ENCODE measurements at regions of chr15 and their contacts with region 1.

Region 1: GRCh38 chr15:88620995-88621772 is at the start of gene AEN:
- DNase-seq: peak; percentile 98
- H3K4me3 ChIP-seq: peak within 1 kb of the TSS; percentile 33 to 78 (median 70)
- H3K27ac ChIP-seq: peak within 1 kb of the TSS; percentile 81
- H3K4me1 ChIP-seq: peaks cover 31% of the 10 kb centered on the region
- H3K27me3 ChIP-seq: no peaks in the 10 kb centered on the region
- CTCF ChIP-seq: no peak
- POLR2A ChIP-seq: peak; percentile 72
- total RNA-seq, gene AEN: 35.6 and 38.3 TPM in 2 replicates

Region 2: GRCh38 chr15:88498996-88499395 is 122.2 kb before region 1 on chr15:
- CTCF ChIA-PET with region 1: no interaction called
- POLR2A ChIA-PET with region 1: no interaction called
- dilution Hi-C with region 1: no loop called
- intact Hi-C with region 1: no loop called
- DNase-seq: no peak
- H3K4me3 ChIP-seq: no peak overlapping the region
- H3K27ac ChIP-seq: no peak overlapping the region
- H3K4me1 ChIP-seq: no peaks in the 10 kb centered on the region
- H3K27me3 ChIP-seq: no peaks in the 10 kb centered on the region
- CTCF ChIP-seq: no peak
- POLR2A ChIP-seq: no peak

Region 3: DNA sequence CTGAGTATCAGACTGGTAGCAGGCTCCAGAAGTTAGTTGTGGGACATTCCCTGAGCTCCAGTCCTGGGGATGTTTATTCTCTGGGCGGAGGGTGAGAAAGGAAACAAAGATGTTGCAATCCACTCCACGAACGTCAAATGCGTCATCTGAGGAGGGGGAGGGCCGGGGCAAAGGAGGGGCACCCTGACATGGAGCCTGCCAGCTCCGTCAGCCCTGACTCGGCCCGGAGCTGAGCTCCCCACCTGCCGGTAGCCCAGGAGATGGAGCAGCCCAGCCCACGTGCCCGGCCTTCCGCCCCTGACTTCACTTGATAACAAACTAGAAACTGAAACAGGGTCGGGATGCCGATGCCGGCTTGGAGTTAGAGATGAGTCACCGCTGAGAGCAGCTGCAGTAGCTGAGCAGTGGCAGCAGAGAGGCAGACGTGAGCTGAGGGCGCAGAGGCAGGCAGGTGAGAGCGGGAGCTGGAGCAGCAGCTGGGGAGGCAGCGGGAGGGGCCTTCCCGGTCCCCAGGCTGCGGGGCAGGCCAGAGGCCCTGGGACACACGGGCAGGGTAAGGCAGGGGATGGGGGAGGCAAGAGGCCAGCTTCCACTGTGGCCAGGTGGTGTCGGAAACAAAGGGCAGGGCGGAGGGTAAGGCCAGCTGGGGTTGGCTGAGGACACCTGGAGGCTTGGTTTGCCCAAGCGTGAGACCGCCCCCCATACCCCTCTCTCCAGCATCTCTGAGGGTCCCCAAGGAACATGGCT is 17.6 kb after region 1 on chr15 and contains the start of gene ISG20:
- CTCF ChIA-PET with region 1: interaction called, 13 read pairs
- POLR2A ChIA-PET with region 1: interaction called, 8 read pairs
- dilution Hi-C with region 1: no loop called
- intact Hi-C with region 1: loop called (anchors 1 kb)
- DNase-seq: peak; percentile 99
- H3K4me3 ChIP-seq: peak within 1 kb of the TSS in 1 of 3 experiments; percentile 24
- H3K27ac ChIP-seq: peak within 1 kb of the TSS; percentile 86
- H3K4me1 ChIP-seq: peaks cover 21% of the 10 kb centered on the region
- H3K27me3 ChIP-seq: no peaks in the 10 kb centered on the region
- CTCF ChIP-seq: peak; percentile 30 to 54
- POLR2A ChIP-seq: peak; percentile 75
- total RNA-seq, gene ISG20: 5.4 and 6.4 TPM in 2 replicates

Region 4: GRCh38 chr15:88664151-88664778 is 43.1 kb after region 1 on chr15:
- CTCF ChIA-PET with region 1: interaction called, 46 read pairs
- POLR2A ChIA-PET with region 1: no interaction called
- dilution Hi-C with region 1: no loop called
- intact Hi-C with region 1: no loop called
- DNase-seq: peak; percentile 34
- H3K4me3 ChIP-seq: no peak overlapping the region
- H3K27ac ChIP-seq: no peak overlapping the region
- H3K4me1 ChIP-seq: peaks cover 8% of the 10 kb centered on the region
- H3K27me3 ChIP-seq: no peaks in the 10 kb centered on the region
- CTCF ChIP-seq: peak in 1 of 2 donors; percentile 15
- POLR2A ChIP-seq: no peak

Region 5: GRCh38 chr15:88752951-88753350 is 131.8 kb after region 1 on chr15:
- CTCF ChIA-PET with region 1: no interaction called
- POLR2A ChIA-PET with region 1: no interaction called
- dilution Hi-C with region 1: no loop called
- intact Hi-C with region 1: no loop called
- DNase-seq: no peak
- H3K4me3 ChIP-seq: no peak overlapping the region
- H3K27ac ChIP-seq: no peak overlapping the region
- H3K4me1 ChIP-seq: no peaks in the 10 kb centered on the region
- H3K27me3 ChIP-seq: peaks cover 0 to 4% of the 10 kb centered on the region in 2 experiments
- CTCF ChIP-seq: no peak
- POLR2A ChIP-seq: no peak

Region 6: GRCh38 chr15:88834211-88834812 is 213.1 kb after region 1 on chr15:
- CTCF ChIA-PET with region 1: interaction called, 69 read pairs
- POLR2A ChIA-PET with region 1: no interaction called
- dilution Hi-C with region 1: no loop called
- intact Hi-C with region 1: loop called (anchors 1 kb)
- DNase-seq: peak; percentile 20
- H3K4me3 ChIP-seq: no peak overlapping the region
- H3K27ac ChIP-seq: no peak overlapping the region
- H3K4me1 ChIP-seq: no peaks in the 10 kb centered on the region
- H3K27me3 ChIP-seq: no peaks in the 10 kb centered on the region
- CTCF ChIP-seq: peak; percentile 53 to 65
- POLR2A ChIP-seq: no peak

Region 7: DNA sequence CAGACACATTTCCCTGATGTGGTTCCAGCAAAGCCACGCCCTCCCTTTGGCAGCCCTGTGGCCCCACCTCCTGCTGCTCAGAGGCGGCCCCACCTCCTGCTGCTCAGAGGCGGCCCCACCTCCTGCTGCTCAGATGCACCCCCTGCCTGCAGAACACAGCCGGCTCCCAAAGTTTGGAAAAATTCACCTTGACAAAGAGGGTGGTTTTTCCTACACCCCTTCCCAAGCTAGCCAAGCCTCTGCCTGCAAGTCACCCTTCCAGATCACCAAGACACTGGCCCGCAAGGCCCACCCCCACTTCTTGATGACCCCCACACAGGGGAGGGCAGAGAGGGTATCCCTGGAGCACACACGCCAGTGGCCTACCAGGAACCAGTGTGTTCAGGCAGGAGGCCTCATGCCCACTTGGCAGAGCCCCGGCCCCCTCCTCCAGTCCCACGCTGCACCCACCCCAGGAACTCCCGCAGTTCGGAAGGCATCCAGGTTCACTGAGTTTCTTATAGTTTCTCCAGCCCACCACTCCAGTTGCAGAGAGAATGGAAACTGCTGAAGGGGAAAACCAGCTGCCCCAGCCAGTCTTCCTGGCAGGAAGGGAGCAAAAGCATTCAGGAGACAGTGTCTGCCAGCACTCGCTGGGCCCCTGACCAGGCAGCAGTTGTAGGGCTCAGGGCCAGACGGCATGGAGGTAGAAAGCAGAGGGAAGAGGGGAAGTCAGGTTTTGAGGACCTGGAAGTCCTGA is 276.4 kb after region 1 on chr15:
- CTCF ChIA-PET with region 1: interaction called, 16 read pairs
- POLR2A ChIA-PET with region 1: no interaction called
- dilution Hi-C with region 1: no loop called
- intact Hi-C with region 1: loop called (anchors 1 kb)
- DNase-seq: peak; percentile 84
- H3K4me3 ChIP-seq: no peak overlapping the region
- H3K27ac ChIP-seq: peak overlapping the region; percentile 74
- H3K4me1 ChIP-seq: peaks cover 36% of the 10 kb centered on the region
- H3K27me3 ChIP-seq: no peaks in the 10 kb centered on the region
- CTCF ChIP-seq: peak; percentile 42 to 62
- POLR2A ChIP-seq: peak; percentile 10

Region 8: DNA sequence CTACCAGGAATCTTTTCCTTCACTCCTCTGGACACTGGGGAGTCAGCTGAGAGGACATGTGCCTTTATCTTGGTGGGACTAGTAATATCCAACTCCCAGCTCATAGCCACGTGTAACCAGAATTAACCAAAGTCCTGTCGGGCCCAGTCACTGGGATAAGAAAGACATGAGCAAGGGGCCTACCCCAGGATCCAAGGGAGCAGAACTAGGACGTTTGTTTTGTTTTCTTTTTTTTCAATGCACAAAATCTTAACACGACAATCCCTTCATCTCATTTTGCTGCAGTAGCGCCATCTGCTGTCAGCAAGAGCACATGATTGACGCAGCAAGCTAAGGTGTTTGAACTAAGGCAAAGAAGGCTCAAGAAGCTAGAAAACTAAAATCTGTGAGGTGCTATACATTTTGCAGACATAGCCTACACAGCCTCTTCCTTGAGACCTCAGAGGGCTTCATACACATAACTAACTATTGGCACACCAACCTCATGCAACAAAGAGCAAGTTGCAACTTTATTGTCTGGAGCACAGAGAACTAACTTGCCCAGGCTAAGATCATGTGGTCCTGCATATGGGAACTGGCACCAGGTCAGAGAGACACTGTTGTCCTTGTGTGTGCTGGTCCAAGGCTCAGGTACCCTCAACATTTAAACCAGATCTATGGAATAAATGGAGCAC is 556.6 kb after region 1 on chr15:
- CTCF ChIA-PET with region 1: no interaction called
- POLR2A ChIA-PET with region 1: no interaction called
- dilution Hi-C with region 1: no loop called
- intact Hi-C with region 1: loop called (anchors 10 kb)
- DNase-seq: peak; percentile 73
- H3K4me3 ChIP-seq: no peak overlapping the region
- H3K27ac ChIP-seq: no peak overlapping the region
- H3K4me1 ChIP-seq: peaks cover 8% of the 10 kb centered on the region
- H3K27me3 ChIP-seq: no peaks in the 10 kb centered on the region
- CTCF ChIP-seq: peak; percentile 82 to 89
- POLR2A ChIP-seq: no peak